ENCODE measurements at regions of chr1 and their contacts with region 1.

Region 1: GRCh38 chr1:210400043-210400840 is 71.5 kb downstream of the HHAT start:
- DNase-seq: peak in 6 of 9 donors; percentile 2 to 45 (median 11)
- ATAC-seq: peak; percentile 79
- H3K4me3 ChIP-seq: no peak overlapping the region
- H3K4me3 Mint-ChIP-seq: peak overlapping the region in 1 of 10 donors; percentile 65
- H3K27ac ChIP-seq: no peak overlapping the region
- H3K27ac Mint-ChIP-seq: no peak overlapping the region
- H3K4me1 ChIP-seq: peaks cover 7 to 13% of the 10 kb centered on the region in 2 donors
- H3K4me1 Mint-ChIP-seq: peaks cover 6 to 26% (median 12%) of the 10 kb centered on the region in 7 donors
- H3K27me3 ChIP-seq: no peaks in the 10 kb centered on the region
- H3K27me3 Mint-ChIP-seq: peaks cover 0 to 10% (median 0%) of the 10 kb centered on the region in 5 donors

Region 2: DNA sequence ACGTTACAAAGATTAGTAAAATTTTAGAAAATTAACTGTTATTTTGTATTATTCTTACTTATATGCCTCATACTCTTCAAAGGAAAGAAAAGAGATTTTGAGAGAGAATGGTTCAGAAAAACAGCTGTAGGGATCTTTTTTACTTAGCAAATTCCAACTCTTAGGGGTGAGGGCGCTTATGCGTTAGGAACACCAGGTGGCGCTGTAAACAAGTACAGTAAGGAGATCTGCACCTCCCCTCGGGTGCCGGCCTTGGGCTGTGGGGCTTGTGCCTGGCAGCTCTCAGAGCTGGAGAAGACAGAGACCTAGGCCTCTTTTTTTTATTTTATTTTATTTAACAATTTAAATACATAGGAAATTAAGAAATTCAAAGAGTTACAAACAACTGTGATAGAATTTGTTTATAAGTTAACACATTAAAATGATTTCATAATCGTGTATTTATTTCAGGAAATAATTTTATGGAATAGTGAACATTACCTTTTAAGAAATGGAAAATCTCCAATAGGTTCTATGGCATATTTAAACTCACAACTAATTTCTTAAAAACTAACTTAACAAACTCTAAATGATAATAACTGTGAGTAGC is 539.9 kb before region 1 on chr1:
- CTCF ChIA-PET with region 1: no interaction called
- POLR2A ChIA-PET with region 1: no interaction called
- intact Hi-C with region 1: loop called (anchors 1 kb)
- DNase-seq: peak; percentile 32 to 68 (median 58)
- ATAC-seq: peak; percentile 88
- H3K4me3 ChIP-seq: no peak overlapping the region
- H3K4me3 Mint-ChIP-seq: no peak overlapping the region
- H3K27ac ChIP-seq: no peak overlapping the region
- H3K27ac Mint-ChIP-seq: no peak overlapping the region
- H3K4me1 ChIP-seq: no peaks in the 10 kb centered on the region
- H3K4me1 Mint-ChIP-seq: peaks cover 0 to 5% (median 0%) of the 10 kb centered on the region in 7 donors
- H3K27me3 ChIP-seq: no peaks in the 10 kb centered on the region
- H3K27me3 Mint-ChIP-seq: peaks cover 0 to 25% (median 15%) of the 10 kb centered on the region in 5 donors

Region 3: GRCh38 chr1:210143465-210144062 is 256.7 kb before region 1 on chr1:
- CTCF ChIA-PET with region 1: interaction called, 3 read pairs
- POLR2A ChIA-PET with region 1: no interaction called
- intact Hi-C with region 1: loop called in 1 of 2 experiments (anchors 1 kb)
- DNase-seq: peak in 2 of 9 donors; percentile 2 to 38
- ATAC-seq: no peak
- H3K4me3 ChIP-seq: no peak overlapping the region
- H3K4me3 Mint-ChIP-seq: no peak overlapping the region
- H3K27ac ChIP-seq: no peak overlapping the region
- H3K27ac Mint-ChIP-seq: no peak overlapping the region
- H3K4me1 ChIP-seq: no peaks in the 10 kb centered on the region
- H3K4me1 Mint-ChIP-seq: no peaks in the 10 kb centered on the region
- H3K27me3 ChIP-seq: no peaks in the 10 kb centered on the region
- H3K27me3 Mint-ChIP-seq: peaks cover 4 to 32% (median 21%) of the 10 kb centered on the region in 5 donors

Region 4: DNA sequence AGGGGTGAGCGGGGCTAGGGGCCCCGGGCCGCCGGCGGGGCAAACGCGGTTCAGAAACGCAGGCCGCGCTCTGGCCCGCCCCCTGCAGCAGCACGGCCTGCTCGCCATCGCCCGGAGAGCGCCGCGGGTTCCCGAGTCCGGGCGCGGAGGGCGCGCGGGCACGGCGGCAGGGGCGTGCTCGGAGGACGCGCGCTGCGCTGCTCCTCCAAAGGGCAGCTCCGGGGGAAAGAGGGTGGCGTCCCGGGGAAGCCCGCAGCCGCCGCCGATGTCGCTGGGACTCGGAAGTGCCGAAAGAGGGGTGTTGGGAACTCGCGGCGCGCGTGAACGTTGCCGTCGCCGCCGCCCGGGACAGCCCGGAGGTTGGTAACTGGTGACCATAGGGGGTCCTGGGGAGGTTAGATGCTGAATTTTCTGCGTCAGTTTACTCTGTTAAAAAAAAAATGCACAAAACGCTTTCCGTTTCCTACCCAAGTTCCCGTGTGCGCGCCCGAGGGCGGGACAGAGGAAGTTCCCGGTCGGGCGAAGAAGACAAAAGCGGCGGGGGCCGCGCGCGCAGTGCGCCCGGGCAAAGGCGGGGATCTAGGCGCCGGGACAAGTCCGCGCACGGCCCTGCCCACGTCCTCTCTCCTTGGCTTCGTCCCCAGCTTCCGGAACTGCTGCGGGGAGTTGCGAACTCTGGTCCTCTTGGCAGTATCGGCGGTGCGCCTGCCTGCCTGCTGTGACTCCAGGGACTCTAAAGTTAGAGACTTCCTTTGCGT is 71.3 kb before region 1 on chr1 and contains the start of gene HHAT:
- CTCF ChIA-PET with region 1: no interaction called
- POLR2A ChIA-PET with region 1: no interaction called
- intact Hi-C with region 1: loop called in 1 of 2 experiments (anchors 2 kb)
- DNase-seq: peak; percentile 25 to 74 (median 38)
- ATAC-seq: peak; percentile 67
- H3K4me3 ChIP-seq: peak within 1 kb of the TSS; percentile 66
- H3K4me3 Mint-ChIP-seq: peak within 1 kb of the TSS; percentile 85 to 98 (median 94)
- H3K27ac ChIP-seq: peak within 1 kb of the TSS; percentile 61
- H3K27ac Mint-ChIP-seq: peak within 1 kb of the TSS; percentile 74 to 95 (median 89)
- H3K4me1 ChIP-seq: peaks cover 8 to 33% of the 10 kb centered on the region in 2 donors
- H3K4me1 Mint-ChIP-seq: peaks cover 13 to 31% (median 21%) of the 10 kb centered on the region in 7 donors
- H3K27me3 ChIP-seq: no peaks in the 10 kb centered on the region
- H3K27me3 Mint-ChIP-seq: peaks cover under 1 to 35% (median 10%) of the 10 kb centered on the region in 5 donors
- total RNA-seq, gene HHAT: 1.1 to 3.8 (median 2.7) TPM

Region 5: GRCh38 chr1:210340311-210340710 is 59.9 kb before region 1 on chr1:
- CTCF ChIA-PET with region 1: no interaction called
- POLR2A ChIA-PET with region 1: no interaction called
- intact Hi-C with region 1: no loop called
- DNase-seq: no peak
- ATAC-seq: no peak
- H3K4me3 ChIP-seq: no peak overlapping the region
- H3K4me3 Mint-ChIP-seq: peak overlapping the region in 4 of 10 donors; percentile 20 to 45 (median 22)
- H3K27ac ChIP-seq: no peak overlapping the region
- H3K27ac Mint-ChIP-seq: peak overlapping the region in 2 of 9 donors; percentile 21 to 27
- H3K4me1 ChIP-seq: peaks cover 0 to 31% of the 10 kb centered on the region in 2 donors
- H3K4me1 Mint-ChIP-seq: peaks cover 0 to 19% (median 15%) of the 10 kb centered on the region in 7 donors
- H3K27me3 ChIP-seq: no peaks in the 10 kb centered on the region
- H3K27me3 Mint-ChIP-seq: peaks cover 0 to 18% (median 0%) of the 10 kb centered on the region in 5 donors

Region 6: GRCh38 chr1:210360852-210361477 is 39.3 kb before region 1 on chr1:
- CTCF ChIA-PET with region 1: no interaction called
- POLR2A ChIA-PET with region 1: no interaction called
- intact Hi-C with region 1: loop called (anchors 1 to 2 kb)
- DNase-seq: peak in 1 of 9 donors; percentile 7
- ATAC-seq: no peak
- H3K4me3 ChIP-seq: no peak overlapping the region
- H3K4me3 Mint-ChIP-seq: no peak overlapping the region
- H3K27ac ChIP-seq: no peak overlapping the region
- H3K27ac Mint-ChIP-seq: peak overlapping the region in 1 of 9 donors; percentile 39
- H3K4me1 ChIP-seq: no peaks in the 10 kb centered on the region
- H3K4me1 Mint-ChIP-seq: peaks cover 0 to 9% (median 0%) of the 10 kb centered on the region in 7 donors
- H3K27me3 ChIP-seq: no peaks in the 10 kb centered on the region
- H3K27me3 Mint-ChIP-seq: peaks cover 0 to 3% (median 0%) of the 10 kb centered on the region in 5 donors

Region 7: GRCh38 chr1:210373885-210374599 is 26.2 kb before region 1 on chr1:
- CTCF ChIA-PET with region 1: no interaction called
- POLR2A ChIA-PET with region 1: no interaction called
- intact Hi-C with region 1: loop called in 1 of 2 experiments (anchors 1 kb)
- DNase-seq: peak in 4 of 9 donors; percentile 7 to 67 (median 10)
- ATAC-seq: peak; percentile 79
- H3K4me3 ChIP-seq: no peak overlapping the region
- H3K4me3 Mint-ChIP-seq: no peak overlapping the region
- H3K27ac ChIP-seq: no peak overlapping the region
- H3K27ac Mint-ChIP-seq: peak overlapping the region in 2 of 9 donors; percentile 36 to 46
- H3K4me1 ChIP-seq: peaks cover 0 to 6% of the 10 kb centered on the region in 2 donors
- H3K4me1 Mint-ChIP-seq: peaks cover 0 to 15% (median 11%) of the 10 kb centered on the region in 7 donors
- H3K27me3 ChIP-seq: no peaks in the 10 kb centered on the region
- H3K27me3 Mint-ChIP-seq: peaks cover 0 to 9% (median 0%) of the 10 kb centered on the region in 5 donors